Activated B cell treated with CpG ODN at 0.5 μM for 24 hours (primary cell): ENCODE measurements at regions of chr12 and their contacts with region 1.

Region 1: DNA sequence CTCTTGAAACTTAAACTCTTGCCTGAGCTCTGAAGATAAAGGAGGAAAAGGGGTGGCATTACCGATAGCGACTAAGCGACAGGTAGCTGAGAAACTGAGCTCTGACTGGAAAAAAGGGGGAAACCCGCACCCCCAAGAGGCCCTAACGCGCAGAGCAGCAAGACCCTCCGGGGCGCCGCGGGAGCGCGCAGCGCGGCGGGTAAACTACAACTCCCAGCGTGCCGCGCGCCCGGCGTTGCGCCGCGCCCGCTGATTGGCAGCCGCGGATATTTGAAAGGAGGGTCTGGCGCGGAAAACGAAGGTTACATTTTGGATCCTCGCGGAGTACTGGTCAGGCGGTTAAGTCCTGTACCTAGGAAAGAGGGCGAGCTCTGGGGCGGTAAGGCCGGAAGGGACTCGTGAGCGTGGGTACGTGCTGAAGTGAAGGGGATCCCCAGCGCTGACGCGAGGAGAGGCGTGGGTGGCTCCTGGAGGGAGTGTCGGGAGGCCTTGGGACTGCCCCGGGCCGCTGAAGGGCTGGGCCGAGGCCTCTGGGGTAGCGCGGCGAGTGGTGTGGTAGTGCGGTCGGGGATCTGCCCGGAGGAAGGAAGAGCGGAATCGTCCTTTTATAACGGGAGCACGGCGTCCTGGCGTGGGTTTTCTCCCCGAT is at the start of gene ESPL1:
- DNase-seq: peak; percentile 84
- ATAC-seq: peak; percentile 94
- H3K4me3 Mint-ChIP-seq: peak within 1 kb of the TSS; percentile 98
- H3K27ac Mint-ChIP-seq: peak within 1 kb of the TSS; percentile 91
- H3K4me1 Mint-ChIP-seq: peaks cover 21% of the 10 kb centered on the region
- H3K27me3 Mint-ChIP-seq: no peaks in the 10 kb centered on the region
- CTCF ChIP-seq: no peak
- total RNA-seq, gene ESPL1: 6.2 and 8.2 TPM in 2 replicates

Region 2: DNA sequence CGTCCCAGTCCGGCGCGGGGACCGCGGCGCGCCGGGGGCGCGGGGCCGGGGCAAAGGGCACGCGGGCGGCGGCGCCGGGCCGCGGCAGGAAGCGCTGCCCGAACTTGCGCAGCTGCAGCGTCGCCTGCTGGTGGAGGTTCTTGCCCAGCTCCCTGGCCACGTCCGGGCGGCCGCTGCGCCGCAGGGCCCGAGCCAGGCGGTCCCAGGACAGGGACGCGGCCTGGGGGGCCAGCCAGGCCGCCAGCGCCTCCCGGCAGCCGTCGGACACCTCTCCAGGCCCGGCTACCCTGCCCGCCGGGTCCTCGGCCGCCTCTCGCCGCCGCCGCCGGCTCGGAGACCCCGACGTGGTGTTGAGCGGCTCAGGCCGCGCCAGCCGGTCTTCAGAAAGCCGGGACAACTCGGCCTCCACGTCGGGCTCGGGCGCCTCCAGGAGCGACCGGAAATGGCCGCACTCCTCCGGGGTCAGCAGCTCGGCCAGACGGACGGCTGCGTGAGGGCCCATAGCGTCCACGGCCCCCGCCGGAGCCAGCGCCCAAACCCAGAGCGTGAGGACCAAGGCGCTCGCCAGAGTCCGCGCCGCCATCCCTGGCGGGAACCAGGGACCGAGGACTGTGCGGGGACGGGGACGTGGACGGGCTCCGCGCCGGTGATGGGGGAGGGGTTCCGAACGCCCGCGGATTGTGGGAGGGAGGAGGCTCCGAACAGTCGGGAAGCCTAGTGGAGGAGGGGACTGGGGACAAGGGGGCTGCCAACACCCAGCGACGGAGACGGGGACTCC is 1453.6 kb before region 1 on chr12:
- CTCF ChIA-PET with region 1: no interaction called
- POLR2A ChIA-PET with region 1: no interaction called
- intact Hi-C with region 1: no loop called
- DNase-seq: peak; percentile 64
- ATAC-seq: peak; percentile 88
- H3K4me3 Mint-ChIP-seq: peak overlapping the region; percentile 66
- H3K27ac Mint-ChIP-seq: no peak overlapping the region
- H3K4me1 Mint-ChIP-seq: peaks cover 5% of the 10 kb centered on the region
- H3K27me3 Mint-ChIP-seq: peaks cover 42% of the 10 kb centered on the region
- CTCF ChIP-seq: no peak

Region 3: GRCh38 chr12:53205747-53206419 is 62.2 kb before region 1 on chr12:
- CTCF ChIA-PET with region 1: interaction called, 94 read pairs
- POLR2A ChIA-PET with region 1: interaction called, 18 read pairs
- intact Hi-C with region 1: no loop called
- DNase-seq: peak; percentile 50
- ATAC-seq: peak; percentile 66
- H3K4me3 Mint-ChIP-seq: peak overlapping the region; percentile 89
- H3K27ac Mint-ChIP-seq: peak overlapping the region; percentile 83
- H3K4me1 Mint-ChIP-seq: peaks cover 93% of the 10 kb centered on the region
- H3K27me3 Mint-ChIP-seq: no peaks in the 10 kb centered on the region
- CTCF ChIP-seq: no peak

Region 4: GRCh38 chr12:53213348-53213747 is 54.8 kb before region 1 on chr12:
- CTCF ChIA-PET with region 1: interaction called, 94 read pairs
- POLR2A ChIA-PET with region 1: interaction called, 48 read pairs
- intact Hi-C with region 1: loop called (anchors 1 kb)
- DNase-seq: peak; percentile 82
- ATAC-seq: peak; percentile 75
- H3K4me3 Mint-ChIP-seq: no peak overlapping the region
- H3K27ac Mint-ChIP-seq: peak overlapping the region; percentile 6
- H3K4me1 Mint-ChIP-seq: peaks cover 76% of the 10 kb centered on the region
- H3K27me3 Mint-ChIP-seq: no peaks in the 10 kb centered on the region
- CTCF ChIP-seq: peak; percentile 49

Region 5: GRCh38 chr12:53287741-53288216 is 19.7 kb after region 1 on chr12:
- CTCF ChIA-PET with region 1: interaction called, 27 read pairs
- POLR2A ChIA-PET with region 1: no interaction called
- intact Hi-C with region 1: loop called (anchors 1 kb)
- DNase-seq: peak; percentile 53
- ATAC-seq: peak; percentile 100
- H3K4me3 Mint-ChIP-seq: no peak overlapping the region
- H3K27ac Mint-ChIP-seq: no peak overlapping the region
- H3K4me1 Mint-ChIP-seq: peaks cover 4% of the 10 kb centered on the region
- H3K27me3 Mint-ChIP-seq: no peaks in the 10 kb centered on the region
- CTCF ChIP-seq: no peak

Region 6: GRCh38 chr12:53481957-53482586 is 213.9 kb after region 1 on chr12:
- CTCF ChIA-PET with region 1: no interaction called
- POLR2A ChIA-PET with region 1: no interaction called
- intact Hi-C with region 1: no loop called
- DNase-seq: no peak
- ATAC-seq: peak; percentile 54
- H3K4me3 Mint-ChIP-seq: no peak overlapping the region
- H3K27ac Mint-ChIP-seq: no peak overlapping the region
- H3K4me1 Mint-ChIP-seq: peaks cover 3% of the 10 kb centered on the region
- H3K27me3 Mint-ChIP-seq: no peaks in the 10 kb centered on the region
- CTCF ChIP-seq: no peak